A673 (cell line): ENCODE measurements at regions of chr5 and their contacts with region 1.

Region 1: GRCh38 chr5:138449501-138450239 is 10.8 kb downstream of the REEP2 start:
- DNase-seq: peak; percentile 92
- H3K4me3 ChIP-seq: peak overlapping the region; percentile 31
- H3K27ac ChIP-seq: peak overlapping the region; percentile 73
- H3K4me1 ChIP-seq: peaks cover 23% of the 10 kb centered on the region
- H3K27me3 ChIP-seq: no peaks in the 10 kb centered on the region
- CTCF ChIP-seq: peak; percentile 97

Region 2: DNA sequence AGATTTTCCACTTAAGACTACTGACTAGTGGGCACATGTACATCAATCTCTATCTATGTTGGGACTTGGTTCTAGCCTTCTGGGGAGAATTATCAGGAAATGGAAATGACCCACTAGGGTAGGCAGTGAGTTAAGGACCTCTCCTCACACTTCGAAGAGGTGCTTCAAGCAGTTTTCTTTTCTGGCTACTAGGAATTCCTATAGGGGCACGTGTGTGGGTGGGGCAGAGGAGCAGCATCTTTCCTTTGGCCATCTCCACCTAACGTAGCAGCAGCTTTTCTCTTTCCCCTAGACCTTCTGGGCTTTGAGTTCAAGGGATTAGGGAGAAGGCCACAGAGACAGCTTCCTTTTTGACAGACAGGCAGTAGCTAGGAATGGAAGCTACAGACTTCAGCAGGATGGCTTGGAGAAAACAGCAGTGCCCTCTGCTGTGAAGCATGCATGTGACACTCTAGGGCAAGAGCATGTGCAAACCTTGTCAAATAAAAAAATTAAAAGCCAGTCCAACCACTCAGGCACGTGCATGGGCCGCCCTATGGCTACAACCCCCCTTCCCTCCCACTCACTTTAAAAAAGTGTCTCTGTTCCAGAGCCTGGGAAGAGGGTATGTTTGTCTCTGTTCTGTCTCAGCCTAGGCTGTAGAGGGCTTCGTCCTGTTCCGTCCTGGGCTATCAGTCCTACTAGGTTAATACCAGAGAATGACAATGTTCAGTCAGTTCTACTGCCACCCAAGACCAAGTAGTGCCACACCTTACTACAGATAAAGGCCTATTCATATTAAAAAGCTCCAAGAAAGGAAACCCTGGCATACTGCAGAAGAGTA is 166.5 kb before region 1 on chr5:
- CTCF ChIA-PET with region 1: no interaction called
- POLR2A ChIA-PET with region 1: no interaction called
- intact Hi-C with region 1: no loop called
- DNase-seq: peak; percentile 57
- H3K4me3 ChIP-seq: no peak overlapping the region
- H3K27ac ChIP-seq: no peak overlapping the region
- H3K4me1 ChIP-seq: no peaks in the 10 kb centered on the region
- H3K27me3 ChIP-seq: no peaks in the 10 kb centered on the region
- CTCF ChIP-seq: peak; percentile 60

Region 3: GRCh38 chr5:138503487-138504270 is 54.0 kb after region 1 on chr5:
- CTCF ChIA-PET with region 1: interaction called, 27 read pairs
- POLR2A ChIA-PET with region 1: no interaction called
- intact Hi-C with region 1: loop called (anchors 1 kb)
- DNase-seq: peak; percentile 80
- H3K4me3 ChIP-seq: no peak overlapping the region
- H3K27ac ChIP-seq: no peak overlapping the region
- H3K4me1 ChIP-seq: peaks cover 12% of the 10 kb centered on the region
- H3K27me3 ChIP-seq: no peaks in the 10 kb centered on the region
- CTCF ChIP-seq: peak; percentile 79

Region 4: GRCh38 chr5:138542956-138543729 is 93.5 kb after region 1 on chr5 and contains the start of gene ETF1:
- CTCF ChIA-PET with region 1: interaction called, 3 read pairs
- POLR2A ChIA-PET with region 1: no interaction called
- intact Hi-C with region 1: loop called (anchors 5 kb)
- DNase-seq: peak; percentile 100
- H3K4me3 ChIP-seq: peak within 1 kb of the TSS; percentile 87
- H3K27ac ChIP-seq: peak within 1 kb of the TSS; percentile 99
- H3K4me1 ChIP-seq: peaks cover 28% of the 10 kb centered on the region
- H3K27me3 ChIP-seq: no peaks in the 10 kb centered on the region
- CTCF ChIP-seq: no peak
- total RNA-seq, gene ETF1: 172 and 191 TPM in 2 replicates

Region 5: GRCh38 chr5:138725138-138725833 is 275.6 kb after region 1 on chr5:
- CTCF ChIA-PET with region 1: no interaction called
- POLR2A ChIA-PET with region 1: no interaction called
- intact Hi-C with region 1: no loop called
- DNase-seq: peak; percentile 84
- H3K4me3 ChIP-seq: no peak overlapping the region
- H3K27ac ChIP-seq: peak overlapping the region; percentile 59
- H3K4me1 ChIP-seq: peaks cover 19% of the 10 kb centered on the region
- H3K27me3 ChIP-seq: no peaks in the 10 kb centered on the region
- CTCF ChIP-seq: peak; percentile 65

Region 6: DNA sequence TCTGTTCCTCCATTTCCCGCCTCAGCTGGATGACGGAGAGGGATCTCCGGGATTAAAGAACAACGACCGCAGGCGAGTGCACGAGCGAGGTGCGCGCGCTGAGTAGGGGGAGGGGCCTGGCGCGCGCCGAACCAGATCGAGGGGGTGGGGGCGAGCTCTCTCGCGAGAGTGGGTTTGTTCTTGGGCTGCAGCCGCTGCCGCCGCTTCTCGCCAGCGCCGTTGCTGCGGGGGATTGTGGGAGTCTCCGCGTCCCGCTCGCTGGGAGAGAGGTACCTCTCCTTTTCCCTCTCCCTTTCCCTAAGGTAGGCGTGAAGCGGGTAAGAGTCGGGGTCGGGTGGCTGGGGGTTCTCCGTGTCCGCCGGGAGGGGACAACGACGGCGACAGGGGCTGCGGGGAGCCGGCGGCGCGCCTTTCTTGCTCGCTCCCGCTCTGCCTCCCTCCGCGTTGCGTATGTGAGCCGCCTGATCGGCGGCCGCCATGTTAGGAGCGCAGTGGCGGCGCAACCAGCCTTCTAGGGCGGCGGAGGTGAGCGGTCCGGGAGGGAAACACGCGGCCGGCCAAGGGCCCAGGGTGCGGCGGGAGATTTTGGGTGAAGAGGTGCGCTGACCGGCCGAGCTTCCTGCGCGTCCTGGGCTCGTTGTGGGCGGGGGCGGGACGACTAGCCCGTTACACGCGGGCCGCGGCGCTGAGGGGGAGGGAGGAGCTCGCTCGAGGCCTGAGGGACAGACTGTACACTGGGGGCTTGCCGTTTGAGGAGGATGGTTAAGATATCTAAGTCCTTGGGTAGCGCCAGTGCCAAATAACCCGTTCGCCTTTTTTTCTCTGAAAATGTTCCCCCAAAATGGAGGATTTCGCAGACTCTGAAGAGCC is 844.1 kb after region 1 on chr5 and contains the start of gene MATR3:
- CTCF ChIA-PET with region 1: no interaction called
- POLR2A ChIA-PET with region 1: interaction called, 27 read pairs
- intact Hi-C with region 1: no loop called
- DNase-seq: peak; percentile 98
- H3K4me3 ChIP-seq: peak within 1 kb of the TSS; percentile 76
- H3K27ac ChIP-seq: peak within 1 kb of the TSS; percentile 99
- H3K4me1 ChIP-seq: peaks cover 27% of the 10 kb centered on the region
- H3K27me3 ChIP-seq: no peaks in the 10 kb centered on the region
- CTCF ChIP-seq: no peak
- total RNA-seq, gene MATR3: 286 and 299 TPM in 2 replicates